Breast epithelium (tissue), 4 donors: ENCODE measurements at regions of chr4 and their contacts with region 1.

Region 1: DNA sequence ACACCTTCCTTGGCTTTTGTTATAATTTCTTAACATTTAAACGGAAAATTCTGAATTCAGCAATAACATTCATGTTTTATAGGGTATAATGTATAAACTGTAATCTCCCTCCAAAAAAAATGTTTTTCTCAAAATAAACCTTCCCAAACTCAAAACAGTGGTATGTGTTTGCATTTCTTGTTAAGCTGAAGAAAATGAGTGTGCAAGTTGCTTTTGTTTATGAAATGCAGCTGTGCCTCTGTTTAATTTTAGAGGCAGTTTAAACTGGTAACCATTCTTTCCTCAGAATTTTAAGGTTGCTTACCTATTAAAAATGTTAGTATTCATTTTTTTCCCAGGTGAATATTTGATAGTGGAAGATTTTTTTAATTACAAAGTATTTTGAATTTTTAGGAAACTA is 105.0 kb upstream of the ANKRD50 start:
- DNase-seq: no peak
- H3K4me3 ChIP-seq: no peak overlapping the region
- H3K27ac ChIP-seq: no peak overlapping the region
- H3K4me1 ChIP-seq: no peaks in the 10 kb centered on the region
- H3K27me3 ChIP-seq: no peaks in the 10 kb centered on the region
- CTCF ChIP-seq: no peak
- POLR2A ChIP-seq: no peak

Region 2: GRCh38 chr4:124863107-124863506 is 45.6 kb after region 1 on chr4:
- intact Hi-C with region 1: loop called (anchors 2 kb)
- DNase-seq: no peak
- H3K4me3 ChIP-seq: no peak overlapping the region
- H3K27ac ChIP-seq: no peak overlapping the region
- H3K4me1 ChIP-seq: no peaks in the 10 kb centered on the region
- H3K27me3 ChIP-seq: no peaks in the 10 kb centered on the region
- CTCF ChIP-seq: no peak
- POLR2A ChIP-seq: no peak